Activated CD8-positive, alpha-beta T cell treated with anti-CD3 and anti-CD28 coated beads, Interleukin-2, amount 10 ng/mL, durations not matched to agents 7 days and 5 days (primary cell): ENCODE measurements at regions of chr11 and their contacts with region 1.

Region 1: DNA sequence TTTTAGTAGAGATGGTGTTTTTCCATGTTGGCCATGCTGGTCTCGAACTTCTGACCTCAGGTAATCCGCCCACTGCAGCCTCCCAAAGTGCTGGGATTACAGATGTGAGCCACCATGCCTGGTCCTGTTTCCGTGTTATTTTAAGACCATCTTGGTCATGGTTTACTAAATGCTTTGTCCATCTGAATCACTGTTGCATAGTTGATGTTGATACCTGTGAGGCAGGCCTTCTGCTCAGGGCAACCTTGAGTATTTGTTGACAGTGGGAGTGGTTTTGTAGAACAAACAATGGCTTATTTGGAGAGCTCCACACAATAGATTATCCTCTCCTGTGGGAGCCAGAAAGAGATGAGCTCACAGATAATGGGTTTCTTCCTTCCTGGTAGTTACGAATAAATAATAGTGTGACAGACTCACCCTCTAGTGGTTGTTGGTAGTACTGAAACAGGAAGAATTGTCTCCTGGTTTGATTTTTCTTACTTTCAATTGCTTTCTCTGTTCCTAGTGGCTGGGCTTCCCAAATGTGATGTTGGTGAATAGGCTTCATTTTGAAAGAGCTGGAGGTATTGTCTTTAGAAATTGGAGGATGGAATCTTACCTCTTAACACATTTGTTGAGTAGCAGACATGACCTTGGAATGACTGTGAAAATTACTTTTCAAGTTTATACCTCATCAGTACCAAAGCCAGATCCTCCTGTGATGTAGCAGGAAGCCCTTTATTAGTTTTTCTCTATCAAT is 39.0 kb downstream of the CTNND1 start:
- DNase-seq: peak; percentile 40
- ATAC-seq: peak; percentile 90
- H3K4me3 Mint-ChIP-seq: peak overlapping the region; percentile 20
- H3K27ac Mint-ChIP-seq: peak overlapping the region; percentile 70
- H3K4me1 Mint-ChIP-seq: peaks cover 41% of the 10 kb centered on the region
- H3K27me3 Mint-ChIP-seq: no peaks in the 10 kb centered on the region

Region 2: DNA sequence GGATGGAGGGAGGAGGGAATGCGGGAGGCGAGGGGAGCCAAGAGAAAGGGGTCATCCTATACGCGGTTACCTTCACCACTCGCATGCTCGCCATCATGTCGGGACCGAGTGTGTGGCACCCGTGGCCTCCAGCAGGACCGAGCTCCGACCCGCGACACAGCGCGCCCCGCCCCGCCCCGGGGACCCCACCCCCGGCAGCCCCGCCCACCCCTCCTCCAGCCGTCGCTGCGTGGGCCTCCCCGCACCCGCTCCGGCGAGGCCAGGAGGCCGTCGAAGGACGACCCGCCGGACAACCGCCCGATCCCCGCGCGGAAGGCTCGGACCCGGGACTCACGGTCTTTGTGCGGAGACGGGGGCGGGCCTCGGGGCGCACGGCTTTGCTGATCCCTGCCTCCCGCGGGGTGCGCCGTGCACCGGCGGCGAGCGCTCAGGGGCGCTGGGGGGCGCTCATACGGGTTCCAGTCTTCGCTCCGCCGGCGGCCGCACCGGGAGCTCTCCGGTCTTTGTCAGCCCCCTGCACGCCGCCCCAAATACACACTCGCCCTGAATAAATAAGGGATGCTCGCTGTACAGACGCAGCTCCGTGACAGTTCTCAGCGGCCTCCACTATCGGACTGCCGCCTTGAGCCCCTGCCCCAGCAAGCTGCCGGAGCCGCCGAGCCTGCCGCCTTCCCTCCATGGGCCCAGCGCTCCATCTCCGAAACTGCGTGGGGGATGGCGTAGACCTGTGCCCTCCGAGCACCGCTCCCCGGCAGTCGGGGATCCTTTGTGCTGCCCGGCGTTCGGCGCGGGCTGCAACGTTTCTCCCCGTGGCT is 232.9 kb before region 1 on chr11 and contains the start of gene UBE2L6:
- CTCF ChIA-PET with region 1: interaction called, 21 read pairs
- POLR2A ChIA-PET with region 1: no interaction called
- DNase-seq: peak; percentile 72
- ATAC-seq: peak; percentile 76
- H3K4me3 Mint-ChIP-seq: peak within 1 kb of the TSS; percentile 97
- H3K27ac Mint-ChIP-seq: peak within 1 kb of the TSS; percentile 93
- H3K4me1 Mint-ChIP-seq: peaks cover 47% of the 10 kb centered on the region
- H3K27me3 Mint-ChIP-seq: no peaks in the 10 kb centered on the region
- total RNA-seq, gene UBE2L6: 222 to 232 TPM

Region 3: DNA sequence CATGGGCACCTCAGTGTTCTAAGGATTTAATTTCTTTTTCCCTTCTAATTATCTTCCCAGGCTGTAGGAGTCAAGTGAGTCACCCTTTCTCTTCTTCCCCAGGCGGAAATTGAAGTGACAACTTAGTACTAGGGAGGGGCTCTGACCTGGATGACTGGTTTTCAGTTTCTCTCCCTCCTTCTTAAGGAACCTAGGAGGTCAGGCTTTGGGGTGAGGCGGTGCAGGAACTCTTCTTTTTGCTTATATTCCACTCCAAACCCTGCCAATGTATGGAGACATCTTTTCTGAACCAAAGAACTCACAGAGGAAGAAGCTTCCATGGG is 120.1 kb before region 1 on chr11:
- CTCF ChIA-PET with region 1: interaction called, 55 read pairs
- POLR2A ChIA-PET with region 1: interaction called, 3 read pairs
- DNase-seq: no peak
- ATAC-seq: no peak
- H3K4me3 Mint-ChIP-seq: no peak overlapping the region
- H3K27ac Mint-ChIP-seq: peak overlapping the region; percentile 24
- H3K4me1 Mint-ChIP-seq: peaks cover 32% of the 10 kb centered on the region
- H3K27me3 Mint-ChIP-seq: no peaks in the 10 kb centered on the region

Region 4: GRCh38 chr11:57729479-57729878 is 71.1 kb before region 1 on chr11:
- CTCF ChIA-PET with region 1: interaction called, 14 read pairs
- POLR2A ChIA-PET with region 1: no interaction called
- DNase-seq: no peak
- ATAC-seq: no peak
- H3K4me3 Mint-ChIP-seq: no peak overlapping the region
- H3K27ac Mint-ChIP-seq: no peak overlapping the region
- H3K4me1 Mint-ChIP-seq: peaks cover 5% of the 10 kb centered on the region
- H3K27me3 Mint-ChIP-seq: no peaks in the 10 kb centered on the region

Region 5: DNA sequence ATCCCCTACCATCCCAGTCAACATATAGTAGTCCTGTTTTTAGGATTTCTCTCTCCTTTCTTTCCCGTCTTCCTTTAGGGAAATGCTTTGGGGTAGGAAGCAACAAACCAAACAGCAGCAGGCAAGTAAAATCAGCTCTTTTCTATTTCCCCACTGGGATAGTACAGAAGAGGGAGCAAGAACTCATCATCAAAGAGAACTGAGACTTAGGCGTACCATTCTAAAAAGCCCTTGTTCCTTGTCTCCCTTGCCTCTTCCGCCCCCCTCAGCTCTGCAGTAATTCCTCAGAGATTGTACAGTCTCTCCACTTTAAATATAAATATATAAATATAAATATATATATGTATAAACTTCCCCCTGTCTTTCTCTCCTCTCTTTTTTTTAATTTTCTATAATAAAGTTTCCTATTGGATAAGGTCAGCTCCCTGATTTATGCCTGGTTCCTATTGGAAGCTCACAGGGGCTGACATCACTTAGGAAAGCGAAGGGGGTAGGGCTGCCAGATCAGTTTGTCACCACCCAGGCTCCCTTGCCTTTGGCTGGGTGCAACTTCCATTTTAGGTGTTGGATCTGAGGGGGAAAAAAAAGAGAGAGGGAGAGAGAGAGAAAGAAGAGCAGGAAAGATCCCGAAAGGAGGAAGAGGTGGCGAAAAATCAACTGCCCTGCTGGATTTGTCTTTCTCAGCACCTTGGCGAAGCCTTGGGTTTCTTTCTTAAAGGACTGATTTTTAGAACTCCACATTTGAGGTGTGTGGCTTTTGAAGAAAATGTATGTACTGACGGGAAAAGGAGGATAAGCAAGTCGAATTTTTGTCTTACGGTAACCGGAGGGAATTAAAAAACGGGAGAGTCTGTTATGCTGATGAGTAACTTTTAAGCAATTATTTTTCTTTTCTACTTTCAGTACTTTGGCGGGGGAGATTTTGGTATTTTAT is 39.0 kb before region 1 on chr11 and contains the start of gene CTNND1:
- CTCF ChIA-PET with region 1: interaction called, 96 read pairs
- POLR2A ChIA-PET with region 1: no interaction called
- DNase-seq: no peak
- ATAC-seq: no peak
- H3K4me3 Mint-ChIP-seq: peak within 1 kb of the TSS; percentile 35
- H3K27ac Mint-ChIP-seq: no peak within 1 kb of the TSS
- H3K4me1 Mint-ChIP-seq: peaks cover 25% of the 10 kb centered on the region
- H3K27me3 Mint-ChIP-seq: no peaks in the 10 kb centered on the region
- total RNA-seq, gene CTNND1: 6.8 to 8.4 TPM